Heart right ventricle (tissue), 16 donors: ENCODE measurements at regions of chr14 and their contacts with region 1.

Region 1: GRCh38 chr14:83923842-83924241 is 1606.1 kb upstream of the FLRT2 start:
- DNase-seq: no peak
- ATAC-seq: no peak
- H3K4me3 ChIP-seq: no peak overlapping the region
- H3K27ac ChIP-seq: no peak overlapping the region
- H3K4me1 ChIP-seq: no peaks in the 10 kb centered on the region
- H3K27me3 ChIP-seq: no peaks in the 10 kb centered on the region
- CTCF ChIP-seq: no peak

Region 2: DNA sequence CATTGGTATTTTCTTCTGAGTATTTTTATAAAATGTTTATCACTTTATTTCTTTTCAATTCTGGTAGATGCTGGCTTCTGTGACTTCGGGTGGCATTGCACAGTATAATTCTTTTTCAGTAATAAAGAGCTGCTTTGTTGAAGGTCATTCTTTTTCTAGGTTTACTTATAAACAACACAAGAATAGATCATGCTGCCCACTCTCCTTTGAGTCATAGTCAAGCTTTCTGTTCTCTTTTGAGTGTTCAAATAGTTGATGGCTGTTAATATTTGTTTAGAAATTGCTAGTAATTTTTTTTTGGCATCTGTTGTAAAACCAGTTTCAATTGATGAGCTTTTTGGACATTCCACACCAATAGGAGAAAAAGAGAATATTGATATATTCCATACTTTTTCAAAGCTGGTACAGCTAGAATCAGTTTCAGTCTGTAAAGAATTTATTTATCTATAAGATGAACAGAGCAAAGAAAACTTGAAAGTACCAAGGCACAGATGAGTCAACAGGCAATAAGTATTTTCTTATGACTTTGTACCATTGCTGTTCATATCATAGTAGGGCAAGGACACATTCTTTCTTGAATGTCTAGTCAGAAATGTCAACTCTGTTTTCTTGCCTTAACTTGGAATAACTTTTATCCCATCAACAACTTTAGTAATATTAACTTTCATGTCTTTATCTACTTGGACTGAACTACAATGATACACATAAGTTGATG is 1877.2 kb before region 1 on chr14:
- intact Hi-C with region 1: loop called in 1 of 10 experiments (anchors 5 kb)
- DNase-seq: no peak
- ATAC-seq: no peak
- H3K4me3 ChIP-seq: no peak overlapping the region
- H3K27ac ChIP-seq: no peak overlapping the region
- H3K4me1 ChIP-seq: no peaks in the 10 kb centered on the region
- H3K27me3 ChIP-seq: no peaks in the 10 kb centered on the region
- CTCF ChIP-seq: no peak

Region 3: GRCh38 chr14:83491091-83491490 is 432.8 kb before region 1 on chr14:
- intact Hi-C with region 1: no loop called
- DNase-seq: no peak
- ATAC-seq: no peak
- H3K4me3 ChIP-seq: no peak overlapping the region
- H3K27ac ChIP-seq: no peak overlapping the region
- H3K4me1 ChIP-seq: no peaks in the 10 kb centered on the region
- H3K27me3 ChIP-seq: no peaks in the 10 kb centered on the region
- CTCF ChIP-seq: no peak

Region 4: DNA sequence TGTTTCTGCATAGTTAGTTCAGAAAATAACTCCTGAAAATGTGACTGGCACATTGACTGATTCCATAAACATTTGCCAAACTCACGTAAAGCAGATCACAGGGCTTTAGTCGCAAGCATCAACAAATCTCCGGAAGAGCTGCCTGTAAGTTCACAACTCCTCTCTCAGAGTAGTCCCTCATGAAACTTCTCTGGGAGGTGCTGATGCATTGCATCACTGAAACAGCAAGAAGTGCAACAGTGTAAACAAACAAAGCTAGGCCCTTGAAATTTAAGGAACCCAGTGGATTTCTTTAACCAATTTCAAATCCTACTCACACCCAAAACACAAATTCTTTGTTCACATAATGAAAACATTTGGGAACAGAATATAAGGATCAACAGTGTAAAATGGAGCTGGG is 85.6 kb before region 1 on chr14:
- intact Hi-C with region 1: no loop called
- DNase-seq: no peak
- ATAC-seq: no peak
- H3K4me3 ChIP-seq: no peak overlapping the region
- H3K27ac ChIP-seq: no peak overlapping the region
- H3K4me1 ChIP-seq: no peaks in the 10 kb centered on the region
- H3K27me3 ChIP-seq: no peaks in the 10 kb centered on the region
- CTCF ChIP-seq: no peak